Activated CD4-positive, alpha-beta T cell treated with anti-CD3 and anti-CD28 coated beads, Interleukin-2, amount 10 ng/mL, durations not matched to agents 7 days and 5 days (primary cell): ENCODE measurements at regions of chr19 and their contacts with region 1.

Region 1: GRCh38 chr19:45643024-45643926 is 4.1 kb upstream of the EML2 start:
- DNase-seq: peak; percentile 90
- H3K4me3 Mint-ChIP-seq: peak overlapping the region; percentile 23
- H3K27ac Mint-ChIP-seq: peak overlapping the region; percentile 75
- H3K4me1 Mint-ChIP-seq: peaks cover 56% of the 10 kb centered on the region
- H3K27me3 Mint-ChIP-seq: peaks cover 3% of the 10 kb centered on the region

Region 2: DNA sequence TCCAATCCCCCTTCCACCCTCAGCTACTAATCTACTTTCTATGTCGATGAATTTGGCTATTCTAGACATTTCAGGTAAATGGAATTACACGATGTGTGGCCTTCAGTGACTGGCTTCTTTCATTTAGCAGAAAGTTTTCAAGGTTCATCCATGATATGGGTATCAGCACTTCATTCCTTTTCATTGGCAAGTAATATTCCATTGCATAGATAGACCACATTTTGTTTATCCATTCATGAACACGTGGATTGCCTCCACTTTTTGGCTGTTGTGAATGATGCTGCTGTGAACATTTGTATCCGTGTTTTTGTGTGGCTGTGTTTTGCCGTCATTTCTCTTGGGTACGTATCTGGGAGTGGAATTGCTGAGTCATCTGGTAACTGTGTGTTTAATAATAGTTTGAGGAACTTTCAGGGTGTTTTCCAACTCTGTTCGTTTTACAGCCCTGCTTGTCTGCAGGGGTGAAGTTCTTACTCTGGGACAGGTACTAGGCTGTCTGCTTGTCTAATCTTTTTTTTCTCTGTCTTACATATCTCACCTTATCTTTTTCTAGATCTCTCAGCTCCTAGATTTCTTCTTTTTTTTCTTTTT is 359.7 kb before region 1 on chr19:
- CTCF ChIA-PET with region 1: no interaction called
- POLR2A ChIA-PET with region 1: no interaction called
- DNase-seq: no peak
- H3K4me3 Mint-ChIP-seq: no peak overlapping the region
- H3K27ac Mint-ChIP-seq: no peak overlapping the region
- H3K4me1 Mint-ChIP-seq: no peaks in the 10 kb centered on the region
- H3K27me3 Mint-ChIP-seq: no peaks in the 10 kb centered on the region

Region 3: GRCh38 chr19:45478454-45479238 is 164.6 kb before region 1 on chr19:
- CTCF ChIA-PET with region 1: interaction called, 27 read pairs
- POLR2A ChIA-PET with region 1: no interaction called
- DNase-seq: peak; percentile 91
- H3K4me3 Mint-ChIP-seq: peak overlapping the region; percentile 81
- H3K27ac Mint-ChIP-seq: peak overlapping the region; percentile 98
- H3K4me1 Mint-ChIP-seq: peaks cover 44% of the 10 kb centered on the region
- H3K27me3 Mint-ChIP-seq: peaks cover 30% of the 10 kb centered on the region

Region 4: GRCh38 chr19:45615795-45616708 is 27.2 kb before region 1 on chr19:
- CTCF ChIA-PET with region 1: interaction called, 14 read pairs
- POLR2A ChIA-PET with region 1: interaction called, 4 read pairs
- DNase-seq: peak; percentile 78
- H3K4me3 Mint-ChIP-seq: no peak overlapping the region
- H3K27ac Mint-ChIP-seq: peak overlapping the region; percentile 71
- H3K4me1 Mint-ChIP-seq: peaks cover 24% of the 10 kb centered on the region
- H3K27me3 Mint-ChIP-seq: no peaks in the 10 kb centered on the region

Region 5: GRCh38 chr19:45632468-45633196 is 10.6 kb before region 1 on chr19:
- CTCF ChIA-PET with region 1: interaction called, 23 read pairs
- POLR2A ChIA-PET with region 1: no interaction called
- DNase-seq: peak; percentile 36
- H3K4me3 Mint-ChIP-seq: no peak overlapping the region
- H3K27ac Mint-ChIP-seq: peak overlapping the region; percentile 41
- H3K4me1 Mint-ChIP-seq: peaks cover 6% of the 10 kb centered on the region
- H3K27me3 Mint-ChIP-seq: no peaks in the 10 kb centered on the region

Region 6: GRCh38 chr19:45681391-45682015 is 38.2 kb after region 1 on chr19:
- CTCF ChIA-PET with region 1: interaction called, 38 read pairs
- POLR2A ChIA-PET with region 1: no interaction called
- DNase-seq: peak; percentile 88
- H3K4me3 Mint-ChIP-seq: peak overlapping the region; percentile 76
- H3K27ac Mint-ChIP-seq: peak overlapping the region; percentile 90
- H3K4me1 Mint-ChIP-seq: peaks cover 22% of the 10 kb centered on the region
- H3K27me3 Mint-ChIP-seq: peaks cover 7% of the 10 kb centered on the region

Region 7: GRCh38 chr19:45752639-45753038 is 109.4 kb after region 1 on chr19:
- CTCF ChIA-PET with region 1: no interaction called
- POLR2A ChIA-PET with region 1: no interaction called
- DNase-seq: no peak
- H3K4me3 Mint-ChIP-seq: no peak overlapping the region
- H3K27ac Mint-ChIP-seq: no peak overlapping the region
- H3K4me1 Mint-ChIP-seq: no peaks in the 10 kb centered on the region
- H3K27me3 Mint-ChIP-seq: peaks cover 3% of the 10 kb centered on the region

Region 8: DNA sequence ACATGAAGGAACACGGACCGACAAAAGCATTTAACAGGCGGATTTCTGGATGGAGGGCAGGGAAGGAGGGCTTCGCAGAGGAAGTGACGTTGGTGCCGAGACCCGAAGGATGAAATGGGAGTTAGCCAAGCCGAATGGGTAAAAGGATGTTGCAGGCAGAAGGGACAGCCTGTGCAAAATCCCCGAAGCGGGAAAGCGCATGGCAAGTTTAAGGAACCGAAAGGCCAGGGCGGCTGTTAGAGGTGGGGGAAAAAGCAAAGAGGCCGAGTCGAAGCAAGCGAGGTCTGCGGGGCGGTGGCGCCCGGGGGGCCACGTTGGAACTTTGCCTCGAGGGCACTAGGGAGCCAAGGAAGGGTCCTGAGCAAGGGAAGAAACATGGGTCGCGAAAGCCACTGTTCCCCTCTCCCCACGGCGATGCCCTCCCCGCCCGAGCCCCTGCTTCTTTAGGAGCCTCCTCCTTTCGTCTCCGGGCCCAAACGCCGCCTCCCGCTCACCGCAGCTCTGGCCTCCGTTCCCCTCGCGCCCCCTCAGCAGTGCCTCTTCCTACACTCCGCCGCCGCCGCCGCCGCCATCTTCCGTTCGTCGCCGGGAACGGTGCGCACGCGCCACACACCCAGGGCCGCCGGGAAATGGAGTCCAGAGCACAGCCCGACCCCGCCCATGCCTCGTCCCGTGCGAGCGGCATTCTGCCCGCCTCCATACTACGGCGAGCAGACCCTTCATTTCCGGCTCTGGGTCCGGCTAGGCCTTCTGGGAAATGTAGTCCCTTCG is 219.5 kb after region 1 on chr19 and contains the start of gene SYMPK:
- CTCF ChIA-PET with region 1: no interaction called
- POLR2A ChIA-PET with region 1: no interaction called
- DNase-seq: peak; percentile 99
- H3K4me3 Mint-ChIP-seq: peak within 1 kb of the TSS; percentile 93
- H3K27ac Mint-ChIP-seq: peak within 1 kb of the TSS; percentile 95
- H3K4me1 Mint-ChIP-seq: peaks cover 34% of the 10 kb centered on the region
- H3K27me3 Mint-ChIP-seq: peaks cover 29% of the 10 kb centered on the region
- total RNA-seq, gene SYMPK: 91.0 to 98.0 TPM

Region 9: DNA sequence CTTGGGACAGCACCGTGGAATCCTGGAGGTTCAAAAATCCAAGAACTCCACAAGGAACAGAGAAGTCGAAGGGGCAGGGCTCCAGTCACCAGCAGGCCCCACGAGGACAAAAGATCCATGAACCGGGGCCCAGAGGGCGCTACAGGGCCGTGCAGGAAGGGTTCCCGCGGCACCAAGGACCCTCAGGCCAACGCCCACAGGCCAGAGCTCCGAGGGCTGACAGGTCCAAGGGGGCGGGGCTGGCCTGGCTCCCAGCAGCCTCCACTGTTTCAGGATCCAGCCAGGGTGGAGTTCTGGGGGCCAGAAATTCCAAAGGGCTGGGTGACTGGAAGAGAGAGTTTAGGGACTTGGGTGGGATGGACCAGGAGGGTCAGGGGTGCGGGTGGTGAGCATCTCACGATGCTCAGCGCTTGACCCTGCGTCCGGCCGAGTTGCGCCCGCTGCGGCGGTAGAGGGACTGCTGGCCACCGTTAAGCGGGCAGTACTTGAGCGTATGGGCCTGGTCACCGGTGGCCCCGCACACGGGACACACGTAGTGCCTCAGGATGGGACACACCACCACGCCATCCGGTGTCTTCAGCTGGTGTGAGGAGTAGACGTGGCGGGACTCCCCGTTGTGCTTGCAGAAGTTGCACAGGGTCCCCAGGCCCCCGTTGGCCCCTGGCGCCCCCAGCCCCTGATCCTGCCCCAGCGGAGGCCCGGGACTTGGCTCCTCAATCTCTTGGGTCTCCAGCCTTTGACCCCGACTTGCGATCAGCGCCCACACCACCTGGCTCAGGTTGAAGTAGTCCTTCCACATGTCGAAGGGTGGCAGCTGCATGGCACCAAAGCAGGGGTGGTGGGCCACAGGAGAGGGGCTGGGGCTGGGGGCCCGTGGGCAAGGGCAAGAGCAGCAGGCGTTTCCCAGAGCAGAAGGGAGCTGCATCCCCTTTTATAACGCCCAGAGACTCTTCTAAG is 270.9 kb after region 1 on chr19 and contains the start of gene NANOS2:
- CTCF ChIA-PET with region 1: no interaction called
- POLR2A ChIA-PET with region 1: no interaction called
- DNase-seq: no peak
- H3K4me3 Mint-ChIP-seq: no peak within 1 kb of the TSS
- H3K27ac Mint-ChIP-seq: peak within 1 kb of the TSS; percentile 31
- H3K4me1 Mint-ChIP-seq: peaks cover 24% of the 10 kb centered on the region
- H3K27me3 Mint-ChIP-seq: peaks cover 5% of the 10 kb centered on the region
- total RNA-seq, gene NANOS2: not detected